ENCODE measurements at regions of chr19 and their contacts with region 1.

Region 1: DNA sequence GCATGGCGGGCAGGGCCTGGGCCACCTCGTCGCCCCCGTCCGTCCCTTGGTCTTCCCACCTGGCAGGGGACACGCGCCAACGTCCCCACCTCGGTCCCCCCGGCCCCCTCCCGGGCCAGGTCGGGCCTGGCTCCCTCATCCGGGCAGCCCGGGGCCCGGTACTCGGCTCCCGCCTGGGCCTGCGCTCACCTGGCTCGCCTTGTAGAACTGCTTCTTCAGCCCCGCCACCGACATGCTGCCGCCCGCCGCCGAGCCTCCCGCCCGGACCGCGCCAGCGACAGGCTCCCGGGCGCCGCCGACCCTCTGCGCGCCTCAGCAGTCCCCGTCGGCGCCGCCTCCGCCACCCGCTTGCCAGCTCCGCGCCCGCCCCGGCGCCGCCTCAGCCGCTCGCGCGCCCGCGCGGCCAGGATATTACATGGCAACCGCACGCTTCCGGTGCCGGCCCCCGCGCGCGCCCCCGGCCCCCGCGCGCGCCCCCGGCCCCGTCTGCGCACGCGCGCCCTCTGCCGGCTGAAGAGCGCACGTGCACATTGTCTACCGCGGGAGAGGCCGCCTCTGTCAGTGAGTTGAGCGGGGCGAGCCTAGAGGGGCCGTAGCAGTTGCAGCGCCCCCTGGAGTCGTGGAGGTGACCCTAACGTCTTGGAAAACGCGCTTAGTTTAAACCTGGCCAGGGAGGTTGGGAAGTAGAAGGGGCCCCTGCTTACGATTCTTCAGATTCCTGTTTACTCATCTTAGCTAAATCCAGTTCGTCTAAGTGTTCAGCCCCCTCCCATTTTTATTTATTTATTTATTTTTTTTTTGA is at the start of gene SH3GL1:
- DNase-seq: peak; percentile 98
- ATAC-seq: peak; percentile 64
- H3K4me3 Mint-ChIP-seq: peak within 1 kb of the TSS; percentile 97
- H3K27ac Mint-ChIP-seq: peak within 1 kb of the TSS; percentile 93
- H3K4me1 Mint-ChIP-seq: peaks cover 50% of the 10 kb centered on the region
- H3K27me3 Mint-ChIP-seq: no peaks in the 10 kb centered on the region
- total RNA-seq, gene SH3GL1: 54.6 to 56.8 TPM

Region 2: GRCh38 chr19:4369888-4370260 is 30.5 kb before region 1 on chr19:
- POLR2A ChIA-PET with region 1: interaction called, 19 read pairs
- DNase-seq: peak; percentile 82
- ATAC-seq: peak; percentile 59
- H3K4me3 Mint-ChIP-seq: peak overlapping the region; percentile 78
- H3K27ac Mint-ChIP-seq: peak overlapping the region; percentile 98
- H3K4me1 Mint-ChIP-seq: peaks cover 34% of the 10 kb centered on the region
- H3K27me3 Mint-ChIP-seq: no peaks in the 10 kb centered on the region

Measured in activated naive CD8-positive, alpha-beta T cell treated with anti-CD3 and anti-CD28 coated beads, Interleukin-2, amount 10 ng/mL, durations not matched to agents 7 days and 5 days (primary cell).